GM13976 (cell line): ENCODE measurements at regions of chr22 and their contacts with region 1.

Region 1: DNA sequence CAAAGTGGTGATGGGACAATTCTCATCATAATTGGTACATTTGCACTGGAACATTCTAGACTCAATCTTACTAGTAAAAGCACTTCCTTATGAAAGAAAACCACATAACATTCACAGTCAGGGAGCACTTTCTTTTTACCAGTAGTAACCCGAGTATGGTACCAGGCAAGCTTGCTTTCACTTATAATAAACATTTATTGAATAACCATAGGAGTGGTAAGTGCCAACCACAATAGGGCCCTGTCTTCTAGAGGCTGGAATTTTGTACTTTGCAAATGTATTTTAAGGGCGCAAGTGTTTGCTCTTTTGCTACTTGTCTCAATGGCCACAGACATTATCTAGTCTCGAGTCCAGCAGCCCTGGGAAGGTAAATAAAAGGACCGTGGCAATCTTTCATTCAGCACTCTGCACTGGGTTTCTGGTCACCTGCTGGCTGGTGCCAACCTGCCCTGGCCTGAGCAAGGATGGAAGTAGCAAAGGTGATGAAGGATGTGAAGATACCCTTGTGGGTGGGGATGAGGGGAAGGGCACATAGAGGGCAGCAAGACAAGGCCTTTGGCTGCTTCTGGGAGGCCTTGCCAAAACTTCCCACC is 24.2 kb downstream of the C22orf31 start:
- DNase-seq: no peak
- CTCF ChIP-seq: no peak

Region 2: GRCh38 chr22:28855355-28856094 is 181.9 kb before region 1 on chr22:
- in situ Hi-C with region 1: loop called (anchors 5 kb)
- DNase-seq: peak; percentile 73
- CTCF ChIP-seq: peak; percentile 86

Region 3: GRCh38 chr22:29083933-29084591 is 46.6 kb after region 1 on chr22:
- in situ Hi-C with region 1: no loop called
- DNase-seq: no peak
- CTCF ChIP-seq: no peak